ENCODE measurements at regions of chr3 and their contacts with region 1.

Region 1: DNA sequence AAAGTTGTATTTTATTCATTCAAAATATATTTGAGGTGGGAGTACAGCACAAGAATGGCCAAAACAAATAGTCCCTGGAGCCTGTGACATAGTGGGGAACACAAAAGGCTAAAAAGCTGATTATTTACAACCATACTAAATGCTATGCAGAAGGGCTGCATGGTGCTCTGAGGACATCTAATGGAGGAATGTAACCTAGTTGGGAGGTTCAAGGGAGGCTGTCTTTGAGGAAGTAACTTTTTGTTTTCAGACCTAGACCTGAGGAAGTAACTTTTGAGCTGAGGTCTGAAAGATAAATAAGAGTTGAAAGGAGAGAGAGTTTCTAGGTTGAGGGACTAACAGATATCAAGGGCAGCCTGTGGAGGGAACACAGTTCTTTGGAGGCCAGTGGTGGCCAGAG is 34.8 kb upstream of the RASA2 start:
- DNase-seq: peak in 30 of 35 experiments; percentile 15 to 77 (median 45)
- ATAC-seq: peak; percentile 85 to 97 (median 92)
- H3K4me3 ChIP-seq: no peak overlapping the region
- H3K4me3 Mint-ChIP-seq: no peak overlapping the region
- H3K27ac ChIP-seq: peak overlapping the region; percentile 59
- H3K27ac Mint-ChIP-seq: no peak overlapping the region
- H3K4me1 ChIP-seq: peaks cover 8 to 13% of the 10 kb centered on the region in 2 experiments
- H3K4me1 Mint-ChIP-seq: peaks cover 10 to 11% (median 11%) of the 10 kb centered on the region in 3 donors
- H3K27me3 ChIP-seq: peaks cover 0 to 7% of the 10 kb centered on the region in 2 experiments
- H3K27me3 Mint-ChIP-seq: no peaks in the 10 kb centered on the region

Region 2: GRCh38 chr3:141231101-141231935 is 220.7 kb before region 1 on chr3 and contains the start of gene PXYLP1:
- CTCF ChIA-PET with region 1: interaction called, 4 to 16 read pairs
- POLR2A ChIA-PET with region 1: interaction called in 1 of 2 experiments, 3 read pairs
- DNase-seq: peak; percentile 74 to 94 (median 85)
- ATAC-seq: peak; percentile 91 to 95 (median 92)
- H3K4me3 ChIP-seq: peak within 1 kb of the TSS; percentile 84 to 88
- H3K4me3 Mint-ChIP-seq: peak within 1 kb of the TSS; percentile 84 to 97 (median 92)
- H3K27ac ChIP-seq: peak within 1 kb of the TSS; percentile 82
- H3K27ac Mint-ChIP-seq: peak within 1 kb of the TSS; percentile 99
- H3K4me1 ChIP-seq: peaks cover 13 to 51% of the 10 kb centered on the region in 2 experiments
- H3K4me1 Mint-ChIP-seq: peaks cover 52 to 61% (median 54%) of the 10 kb centered on the region in 3 donors
- H3K27me3 ChIP-seq: no peaks in the 10 kb centered on the region
- H3K27me3 Mint-ChIP-seq: no peaks in the 10 kb centered on the region
- total RNA-seq, gene PXYLP1: 12.5 to 33.0 (median 14.6) TPM

Region 3: GRCh38 chr3:141303481-141304223 is 148.4 kb before region 1 on chr3:
- CTCF ChIA-PET with region 1: interaction called, 19 to 67 read pairs
- POLR2A ChIA-PET with region 1: interaction called in 1 of 2 experiments, 4 read pairs
- DNase-seq: peak in 27 of 35 experiments; percentile 19 to 89 (median 50)
- ATAC-seq: peak; percentile 27 to 48 (median 37)
- H3K4me3 ChIP-seq: no peak overlapping the region
- H3K4me3 Mint-ChIP-seq: no peak overlapping the region
- H3K27ac ChIP-seq: no peak overlapping the region
- H3K27ac Mint-ChIP-seq: peak overlapping the region in 1 of 2 donors; percentile 39
- H3K4me1 ChIP-seq: peaks cover 23 to 48% of the 10 kb centered on the region in 2 experiments
- H3K4me1 Mint-ChIP-seq: peaks cover 57 to 78% (median 68%) of the 10 kb centered on the region in 3 donors
- H3K27me3 ChIP-seq: no peaks in the 10 kb centered on the region
- H3K27me3 Mint-ChIP-seq: no peaks in the 10 kb centered on the region

Region 4: DNA sequence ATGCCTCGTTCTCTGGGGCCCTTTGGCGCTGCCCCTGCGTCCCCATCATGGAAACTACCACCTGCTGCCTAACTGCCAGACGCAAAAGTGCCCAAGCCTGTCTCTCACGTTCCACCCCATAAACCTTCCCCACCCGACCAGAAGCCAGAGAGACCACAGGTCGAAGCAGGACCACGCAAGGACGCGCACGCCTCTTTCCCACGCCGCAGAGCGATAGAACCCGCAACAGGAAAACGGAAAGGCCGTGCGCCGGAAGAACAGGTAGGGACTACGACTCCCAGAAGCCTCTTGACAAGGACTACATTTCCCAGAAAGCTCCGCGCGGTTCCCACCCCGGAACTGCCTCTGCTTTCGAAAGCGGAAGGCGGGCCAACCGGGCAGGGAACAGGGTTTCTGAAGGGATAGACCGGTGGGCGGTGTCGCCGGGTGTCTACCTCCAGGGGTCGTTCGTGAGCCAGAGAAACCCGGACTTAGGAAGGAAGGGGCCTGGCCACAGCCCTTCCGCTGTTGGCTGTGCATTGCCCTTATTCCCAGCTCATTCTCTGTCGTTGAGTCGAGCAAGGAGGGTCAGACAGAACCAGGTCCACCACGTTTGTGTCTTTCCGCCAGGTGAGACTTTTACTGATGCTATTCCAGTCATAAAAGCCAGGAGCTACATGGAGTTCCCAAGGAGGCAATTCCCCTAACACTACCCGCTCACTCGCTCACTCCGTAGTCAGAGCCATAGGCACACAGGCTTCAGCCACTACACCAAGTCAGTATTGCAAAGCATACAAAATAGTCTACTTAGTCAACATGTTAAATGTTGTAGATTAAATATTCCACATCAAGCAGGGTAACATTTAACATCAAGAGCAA is 140.3 kb before region 1 on chr3:
- CTCF ChIA-PET with region 1: interaction called, 7 to 67 read pairs
- POLR2A ChIA-PET with region 1: no interaction called
- DNase-seq: peak; percentile 94 to 98 (median 96)
- ATAC-seq: peak; percentile 88 to 94 (median 92)
- H3K4me3 ChIP-seq: peak overlapping the region; percentile 92 to 96
- H3K4me3 Mint-ChIP-seq: peak overlapping the region; percentile 93 to 100 (median 99)
- H3K27ac ChIP-seq: peak overlapping the region; percentile 74
- H3K27ac Mint-ChIP-seq: peak overlapping the region; percentile 99
- H3K4me1 ChIP-seq: peaks cover 30 to 50% of the 10 kb centered on the region in 2 experiments
- H3K4me1 Mint-ChIP-seq: peaks cover 57 to 59% (median 58%) of the 10 kb centered on the region in 3 donors
- H3K27me3 ChIP-seq: no peaks in the 10 kb centered on the region
- H3K27me3 Mint-ChIP-seq: no peaks in the 10 kb centered on the region

Region 5: DNA sequence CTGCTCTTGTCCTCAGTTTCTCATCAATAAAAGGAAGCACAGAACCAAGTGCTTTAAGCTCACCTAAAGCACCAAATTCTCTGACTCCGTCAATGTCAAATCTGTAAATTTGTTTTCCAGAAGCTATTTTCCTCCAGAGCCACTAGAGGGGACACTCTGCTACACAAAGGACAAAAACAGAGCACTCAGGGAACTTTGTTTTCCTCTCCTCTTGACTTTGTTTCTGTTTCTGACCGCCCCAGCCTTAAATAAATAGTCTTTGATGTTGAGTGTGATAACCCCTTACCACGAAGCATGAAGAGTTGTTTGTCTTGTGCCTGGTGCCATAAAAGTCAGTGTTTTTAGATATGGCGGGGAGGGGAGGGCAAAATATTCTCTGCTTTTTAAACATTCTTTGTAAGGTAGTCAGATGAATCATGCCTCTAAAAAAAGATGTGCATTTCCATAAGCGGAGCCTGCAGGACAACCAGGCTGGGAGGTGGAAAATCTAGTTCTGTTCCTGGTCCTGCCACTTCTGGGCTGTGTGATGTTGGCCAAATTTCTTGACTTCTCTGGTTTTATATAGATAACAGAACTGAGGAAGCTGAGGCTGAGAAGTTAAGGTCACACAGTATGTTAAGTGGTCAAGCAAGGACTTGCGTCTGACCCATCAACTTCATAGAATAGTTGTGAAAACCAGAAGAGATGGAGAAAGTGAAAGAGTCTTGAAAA is 91.0 kb before region 1 on chr3:
- CTCF ChIA-PET with region 1: interaction called, 27 to 38 read pairs
- POLR2A ChIA-PET with region 1: interaction called in 1 of 2 experiments, 3 read pairs
- DNase-seq: peak in 2 of 35 experiments; percentile 14 to 68
- ATAC-seq: peak; percentile 52 to 74 (median 67)
- H3K4me3 ChIP-seq: no peak overlapping the region
- H3K4me3 Mint-ChIP-seq: peak overlapping the region in 1 of 3 donors; percentile 22
- H3K27ac ChIP-seq: no peak overlapping the region
- H3K27ac Mint-ChIP-seq: peak overlapping the region in 1 of 2 donors; percentile 71
- H3K4me1 ChIP-seq: peaks cover 0 to 4% of the 10 kb centered on the region in 2 experiments
- H3K4me1 Mint-ChIP-seq: peaks cover 0 to 8% (median 6%) of the 10 kb centered on the region in 3 donors
- H3K27me3 ChIP-seq: no peaks in the 10 kb centered on the region
- H3K27me3 Mint-ChIP-seq: peaks cover 0 to 3% of the 10 kb centered on the region in 2 donors

Region 6: GRCh38 chr3:141370065-141370533 is 81.9 kb before region 1 on chr3:
- CTCF ChIA-PET with region 1: interaction called, 9 to 23 read pairs
- POLR2A ChIA-PET with region 1: no interaction called
- DNase-seq: peak in 34 of 35 experiments; percentile 23 to 92 (median 58)
- ATAC-seq: peak; percentile 99 to 100 (median 100)
- H3K4me3 ChIP-seq: no peak overlapping the region
- H3K4me3 Mint-ChIP-seq: no peak overlapping the region
- H3K27ac ChIP-seq: no peak overlapping the region
- H3K27ac Mint-ChIP-seq: peak overlapping the region; percentile 4 to 37
- H3K4me1 ChIP-seq: no peaks in the 10 kb centered on the region
- H3K4me1 Mint-ChIP-seq: peaks cover under 1 to 7% (median 5%) of the 10 kb centered on the region in 3 donors
- H3K27me3 ChIP-seq: no peaks in the 10 kb centered on the region
- H3K27me3 Mint-ChIP-seq: no peaks in the 10 kb centered on the region

Region 7: GRCh38 chr3:141441381-141442364 is 10.4 kb before region 1 on chr3:
- CTCF ChIA-PET with region 1: interaction called, 11 to 19 read pairs
- POLR2A ChIA-PET with region 1: interaction called in 1 of 2 experiments, 5 read pairs
- DNase-seq: peak; percentile 27 to 84 (median 65)
- ATAC-seq: peak; percentile 98 to 100 (median 99)
- H3K4me3 ChIP-seq: no peak overlapping the region
- H3K4me3 Mint-ChIP-seq: no peak overlapping the region
- H3K27ac ChIP-seq: peak overlapping the region; percentile 36
- H3K27ac Mint-ChIP-seq: peak overlapping the region; percentile 80 to 85
- H3K4me1 ChIP-seq: peaks cover 0 to 12% of the 10 kb centered on the region in 2 experiments
- H3K4me1 Mint-ChIP-seq: peaks cover 29 to 40% (median 33%) of the 10 kb centered on the region in 3 donors
- H3K27me3 ChIP-seq: no peaks in the 10 kb centered on the region
- H3K27me3 Mint-ChIP-seq: no peaks in the 10 kb centered on the region

Region 8: DNA sequence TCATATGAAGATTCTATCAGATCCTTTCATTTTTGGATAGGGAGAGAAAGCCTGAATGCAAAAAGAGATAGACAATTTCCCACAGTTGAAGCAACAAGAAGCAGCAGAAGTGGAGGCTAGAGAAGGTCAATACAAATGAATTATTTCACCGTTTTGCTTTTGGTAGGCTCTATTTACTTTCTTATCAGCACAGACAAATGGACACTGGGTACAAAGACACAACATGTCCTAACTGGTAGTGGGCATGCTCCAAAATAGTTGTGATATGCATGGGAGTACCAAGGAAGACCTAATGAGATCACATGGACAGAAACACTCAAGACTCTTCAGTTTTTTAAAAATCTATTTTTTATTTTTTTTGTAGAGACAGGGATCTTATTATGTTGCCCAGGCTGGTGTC is 896.4 kb after region 1 on chr3:
- CTCF ChIA-PET with region 1: no interaction called
- POLR2A ChIA-PET with region 1: no interaction called
- DNase-seq: no peak
- ATAC-seq: no peak
- H3K4me3 ChIP-seq: no peak overlapping the region
- H3K4me3 Mint-ChIP-seq: no peak overlapping the region
- H3K27ac ChIP-seq: no peak overlapping the region
- H3K27ac Mint-ChIP-seq: no peak overlapping the region
- H3K4me1 ChIP-seq: no peaks in the 10 kb centered on the region
- H3K4me1 Mint-ChIP-seq: no peaks in the 10 kb centered on the region
- H3K27me3 ChIP-seq: no peaks in the 10 kb centered on the region
- H3K27me3 Mint-ChIP-seq: no peaks in the 10 kb centered on the region